ENCODE measurements at regions of chr12 and their contacts with region 1.

Region 1: GRCh38 chr12:75954041-75954440 is 77.5 kb downstream of the PHLDA1 start:
- DNase-seq: peak; percentile 95
- H3K4me3 ChIP-seq: no peak overlapping the region
- H3K27ac ChIP-seq: peak overlapping the region; percentile 94
- H3K4me1 ChIP-seq: peaks cover 22% of the 10 kb centered on the region
- H3K27me3 ChIP-seq: no peaks in the 10 kb centered on the region
- CTCF ChIP-seq: no peak

Region 2: DNA sequence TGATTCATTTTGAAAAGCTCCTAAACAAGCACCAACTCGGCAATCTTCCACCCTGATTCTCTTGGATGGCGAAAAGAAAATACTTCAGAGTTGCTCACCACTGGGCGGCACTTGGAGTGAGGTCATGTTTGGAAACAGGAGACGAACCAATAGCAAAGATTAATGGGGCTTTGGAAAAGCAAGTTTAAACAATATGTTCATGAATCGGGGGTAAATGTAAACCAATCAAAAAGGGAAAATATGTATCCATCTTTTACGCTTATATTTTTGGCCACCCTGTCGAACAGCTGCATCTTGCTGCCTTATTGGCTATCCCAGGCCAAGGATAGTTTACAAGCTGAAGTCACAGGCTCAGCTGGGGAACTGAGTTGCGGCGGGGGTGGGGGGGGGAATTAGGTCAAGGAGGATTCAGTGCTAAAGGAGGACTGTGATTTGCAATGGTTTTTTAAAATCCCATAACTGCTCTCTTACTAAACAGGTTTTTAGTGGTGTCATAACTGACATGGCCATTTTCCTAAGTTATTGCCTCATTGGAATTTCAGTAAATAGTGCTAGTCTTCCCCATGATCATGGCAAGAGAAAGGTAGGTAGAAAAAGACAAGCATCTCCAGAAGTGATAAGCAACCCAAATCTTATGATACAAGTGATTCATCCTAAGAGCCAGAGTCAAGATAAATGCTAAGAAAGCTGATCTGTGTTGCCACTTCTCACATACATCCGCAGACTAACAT is 133.0 kb before region 1 on chr12:
- CTCF ChIA-PET with region 1: no interaction called
- dilution Hi-C with region 1: no loop called
- in situ Hi-C with region 1: no loop called
- intact Hi-C with region 1: loop called (anchors 2 kb)
- DNase-seq: peak; percentile 79
- H3K4me3 ChIP-seq: no peak overlapping the region
- H3K27ac ChIP-seq: peak overlapping the region; percentile 44
- H3K4me1 ChIP-seq: peaks cover 52% of the 10 kb centered on the region
- H3K27me3 ChIP-seq: no peaks in the 10 kb centered on the region
- CTCF ChIP-seq: peak in 1 of 2 donors; percentile 40

Region 3: GRCh38 chr12:75994186-75994731 is 40.2 kb after region 1 on chr12:
- CTCF ChIA-PET with region 1: no interaction called
- dilution Hi-C with region 1: no loop called
- in situ Hi-C with region 1: no loop called
- intact Hi-C with region 1: loop called (anchors 2 kb)
- DNase-seq: no peak
- H3K4me3 ChIP-seq: no peak overlapping the region
- H3K27ac ChIP-seq: peak overlapping the region; percentile 27
- H3K4me1 ChIP-seq: peaks cover 40% of the 10 kb centered on the region
- H3K27me3 ChIP-seq: no peaks in the 10 kb centered on the region
- CTCF ChIP-seq: no peak

Region 4: GRCh38 chr12:76010732-76011458 is 56.9 kb after region 1 on chr12:
- CTCF ChIA-PET with region 1: no interaction called
- dilution Hi-C with region 1: loop called (anchors 5 kb)
- in situ Hi-C with region 1: no loop called
- intact Hi-C with region 1: no loop called
- DNase-seq: no peak
- H3K4me3 ChIP-seq: no peak overlapping the region
- H3K27ac ChIP-seq: no peak overlapping the region
- H3K4me1 ChIP-seq: peaks cover 5% of the 10 kb centered on the region
- H3K27me3 ChIP-seq: no peaks in the 10 kb centered on the region
- CTCF ChIP-seq: no peak

Measured in mammary epithelial cell (primary cell).